Uterus (tissue), 4 donors: ENCODE measurements at regions of chr15 and their contacts with region 1.

Region 1: DNA sequence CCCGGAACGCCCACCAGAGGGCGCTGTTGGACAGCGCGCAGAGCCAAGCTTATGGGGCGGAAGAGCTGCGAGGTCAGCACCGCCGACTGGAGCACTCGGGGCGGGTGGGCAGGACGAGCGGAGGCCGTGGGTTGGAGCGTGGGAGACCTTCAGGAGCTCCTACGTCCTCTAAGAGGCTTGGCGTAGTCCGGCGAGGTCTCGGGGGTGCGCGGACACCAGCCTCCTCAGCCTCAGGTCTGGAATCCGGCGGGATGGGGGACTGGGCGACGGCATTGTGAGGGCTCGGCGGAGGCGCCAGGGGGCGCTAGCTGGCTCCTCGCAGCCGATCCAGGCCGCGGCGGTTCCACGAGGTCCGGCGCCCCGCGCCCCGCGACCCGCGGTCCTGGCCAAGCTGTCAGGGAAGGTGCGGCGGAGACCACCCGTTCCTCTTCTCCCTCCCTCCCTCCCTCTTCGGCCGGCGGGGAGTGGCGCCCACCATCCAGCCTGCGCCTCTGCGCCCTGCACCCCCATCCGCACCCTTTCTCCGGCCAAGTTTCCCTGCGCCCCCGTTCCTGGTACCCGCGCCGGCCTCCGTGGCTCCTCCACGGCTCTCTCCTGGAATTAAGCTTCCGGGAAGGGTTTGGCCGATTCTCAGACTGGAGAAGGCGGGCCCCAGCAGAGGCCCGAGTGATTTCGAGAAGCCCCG is 24.3 kb upstream of the POLG start:
- DNase-seq: peak; percentile 40 to 77
- H3K4me3 ChIP-seq: peak overlapping the region; percentile 19 to 34
- H3K27ac ChIP-seq: no peak overlapping the region
- H3K4me1 ChIP-seq: peaks cover 0 to 11% of the 10 kb centered on the region in 2 donors
- H3K27me3 ChIP-seq: peaks cover 28% of the 10 kb centered on the region in 2 donors
- CTCF ChIP-seq: peak; percentile 93 to 99 (median 96)
- POLR2A ChIP-seq: no peak

Region 2: GRCh38 chr15:89430530-89431341 is 71.8 kb after region 1 on chr15:
- intact Hi-C with region 1: loop called (anchors 5 kb)
- DNase-seq: peak; percentile 75 to 85
- H3K4me3 ChIP-seq: peak overlapping the region; percentile 13 to 41
- H3K27ac ChIP-seq: no peak overlapping the region
- H3K4me1 ChIP-seq: no peaks in the 10 kb centered on the region
- H3K27me3 ChIP-seq: no peaks in the 10 kb centered on the region
- CTCF ChIP-seq: peak; percentile 92 to 98 (median 94)
- POLR2A ChIP-seq: no peak